GM10248 (cell line): ENCODE measurements at regions of chr16 and their contacts with region 1.

Region 1: GRCh38 chr16:77840673-77841501 is 52.5 kb downstream of the VAT1L start:
- DNase-seq: no peak
- CTCF ChIP-seq: no peak

Region 2: GRCh38 chr16:77207030-77207429 is 633.9 kb before region 1 on chr16:
- CTCF ChIA-PET with region 1: no interaction called
- POLR2A ChIA-PET with region 1: interaction called, 10 read pairs
- DNase-seq: no peak
- CTCF ChIP-seq: no peak

Region 3: GRCh38 chr16:77414752-77415231 is 426.1 kb before region 1 on chr16:
- CTCF ChIA-PET with region 1: no interaction called
- POLR2A ChIA-PET with region 1: no interaction called
- DNase-seq: no peak
- CTCF ChIP-seq: no peak

Region 4: GRCh38 chr16:77812856-77813500 is 27.9 kb before region 1 on chr16:
- CTCF ChIA-PET with region 1: no interaction called
- POLR2A ChIA-PET with region 1: no interaction called
- DNase-seq: no peak
- CTCF ChIP-seq: no peak